Activated CD8-positive, alpha-beta T cell treated with anti-CD3 and anti-CD28 coated beads, Interleukin-2, amount 10 ng/mL, durations not matched to agents 7 days and 5 days (primary cell): ENCODE measurements at regions of chr5 and their contacts with region 1.

Region 1: DNA sequence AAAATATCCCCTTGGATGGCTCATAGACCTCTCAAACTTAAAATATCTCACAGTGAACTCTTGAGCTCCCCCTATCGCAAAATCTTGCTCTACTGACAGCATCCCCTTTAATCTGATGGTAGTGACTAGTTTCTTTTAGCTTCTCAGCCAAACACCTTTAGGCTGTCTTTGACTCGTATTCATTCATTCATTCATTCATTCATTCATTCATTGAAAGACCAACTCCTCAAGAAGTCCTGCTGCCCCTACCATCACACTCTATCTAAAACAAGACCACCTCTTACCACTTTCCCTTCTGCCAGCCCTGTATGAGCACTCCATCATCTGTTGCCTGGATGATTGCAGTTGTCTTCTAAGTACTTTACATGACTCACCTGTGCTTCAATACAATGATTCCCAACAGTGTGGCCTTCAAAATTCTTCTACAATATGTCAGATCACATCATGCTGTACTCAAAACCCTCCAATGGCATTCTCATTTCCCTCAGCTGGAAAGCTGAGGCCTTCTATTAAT is 46.8 kb downstream of the ITGA2 start:
- DNase-seq: no peak
- ATAC-seq: no peak
- H3K4me3 Mint-ChIP-seq: no peak overlapping the region
- H3K27ac Mint-ChIP-seq: no peak overlapping the region
- H3K4me1 Mint-ChIP-seq: peaks cover 77% of the 10 kb centered on the region
- H3K27me3 Mint-ChIP-seq: no peaks in the 10 kb centered on the region

Region 2: DNA sequence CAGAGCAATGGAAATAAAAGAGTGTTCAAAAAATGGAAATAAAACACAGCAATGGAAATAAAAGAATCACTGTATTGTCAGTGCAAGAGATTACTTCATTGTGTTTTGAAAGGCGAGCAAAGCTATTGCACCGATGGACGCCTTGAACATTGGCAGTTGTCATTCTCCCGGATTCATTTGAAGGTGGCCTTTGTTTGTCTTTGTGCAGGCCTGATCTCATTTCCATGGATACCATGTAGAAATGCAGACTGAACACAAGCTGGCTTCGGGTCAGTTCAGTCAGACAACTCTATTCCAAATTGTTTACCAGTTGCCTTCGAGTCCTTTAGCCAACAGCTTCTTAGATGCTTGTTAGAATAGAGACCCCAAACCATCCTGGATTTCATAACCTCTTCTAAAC is 38.5 kb before region 1 on chr5:
- CTCF ChIA-PET with region 1: interaction called, 10 read pairs
- POLR2A ChIA-PET with region 1: no interaction called
- DNase-seq: no peak
- ATAC-seq: no peak
- H3K4me3 Mint-ChIP-seq: no peak overlapping the region
- H3K27ac Mint-ChIP-seq: no peak overlapping the region
- H3K4me1 Mint-ChIP-seq: peaks cover 5% of the 10 kb centered on the region
- H3K27me3 Mint-ChIP-seq: peaks cover 7% of the 10 kb centered on the region

Region 3: DNA sequence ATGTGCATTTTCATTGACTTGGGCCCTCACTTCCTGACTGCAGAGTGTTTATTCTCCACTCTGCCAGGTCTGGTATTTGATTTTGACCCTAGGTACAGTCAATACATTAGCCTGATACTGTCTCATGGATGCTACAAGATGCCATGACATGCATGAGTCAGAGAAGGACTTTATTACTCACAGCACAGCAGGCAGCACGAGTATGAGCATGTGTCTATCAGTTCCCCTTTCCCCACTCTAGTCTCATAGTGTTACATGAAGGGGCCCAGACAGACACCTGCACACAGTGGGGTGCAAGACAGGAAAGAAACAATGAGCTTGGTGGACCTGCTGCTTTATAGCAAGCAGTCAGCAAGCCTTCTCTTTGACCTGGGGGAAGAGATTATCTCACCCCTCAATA is 27.2 kb before region 1 on chr5:
- CTCF ChIA-PET with region 1: interaction called, 23 read pairs
- POLR2A ChIA-PET with region 1: interaction called, 3 read pairs
- DNase-seq: no peak
- ATAC-seq: no peak
- H3K4me3 Mint-ChIP-seq: no peak overlapping the region
- H3K27ac Mint-ChIP-seq: no peak overlapping the region
- H3K4me1 Mint-ChIP-seq: peaks cover 67% of the 10 kb centered on the region
- H3K27me3 Mint-ChIP-seq: peaks cover 4% of the 10 kb centered on the region

Region 4: DNA sequence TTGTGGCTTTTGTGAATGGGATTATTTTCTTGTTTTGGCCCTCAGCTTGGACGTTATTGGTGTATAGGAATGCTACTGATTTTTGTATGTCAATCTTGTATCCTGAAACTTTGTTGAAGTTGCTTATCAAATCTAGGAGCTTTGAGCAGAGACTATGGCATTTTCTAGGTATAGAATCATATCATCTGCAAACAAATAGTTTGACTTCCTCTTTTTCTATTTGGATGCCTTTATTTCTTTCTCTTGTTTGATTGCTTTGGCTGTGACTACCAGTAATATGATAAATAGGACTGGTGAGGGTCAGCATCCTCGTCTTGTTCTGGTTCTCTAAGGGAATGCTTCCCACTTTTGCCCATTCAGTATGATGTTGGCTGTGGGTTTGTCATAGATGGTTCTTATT is 22.1 kb before region 1 on chr5:
- CTCF ChIA-PET with region 1: interaction called, 23 read pairs
- POLR2A ChIA-PET with region 1: no interaction called
- DNase-seq: no peak
- ATAC-seq: no peak
- H3K4me3 Mint-ChIP-seq: no peak overlapping the region
- H3K27ac Mint-ChIP-seq: no peak overlapping the region
- H3K4me1 Mint-ChIP-seq: peaks cover 40% of the 10 kb centered on the region
- H3K27me3 Mint-ChIP-seq: peaks cover 10% of the 10 kb centered on the region

Region 5: GRCh38 chr5:53023969-53024368 is 12.0 kb before region 1 on chr5:
- CTCF ChIA-PET with region 1: interaction called, 14 read pairs
- POLR2A ChIA-PET with region 1: interaction called, 3 read pairs
- DNase-seq: no peak
- ATAC-seq: peak; percentile 44
- H3K4me3 Mint-ChIP-seq: no peak overlapping the region
- H3K27ac Mint-ChIP-seq: no peak overlapping the region
- H3K4me1 Mint-ChIP-seq: peaks cover 3% of the 10 kb centered on the region
- H3K27me3 Mint-ChIP-seq: no peaks in the 10 kb centered on the region

Region 6: DNA sequence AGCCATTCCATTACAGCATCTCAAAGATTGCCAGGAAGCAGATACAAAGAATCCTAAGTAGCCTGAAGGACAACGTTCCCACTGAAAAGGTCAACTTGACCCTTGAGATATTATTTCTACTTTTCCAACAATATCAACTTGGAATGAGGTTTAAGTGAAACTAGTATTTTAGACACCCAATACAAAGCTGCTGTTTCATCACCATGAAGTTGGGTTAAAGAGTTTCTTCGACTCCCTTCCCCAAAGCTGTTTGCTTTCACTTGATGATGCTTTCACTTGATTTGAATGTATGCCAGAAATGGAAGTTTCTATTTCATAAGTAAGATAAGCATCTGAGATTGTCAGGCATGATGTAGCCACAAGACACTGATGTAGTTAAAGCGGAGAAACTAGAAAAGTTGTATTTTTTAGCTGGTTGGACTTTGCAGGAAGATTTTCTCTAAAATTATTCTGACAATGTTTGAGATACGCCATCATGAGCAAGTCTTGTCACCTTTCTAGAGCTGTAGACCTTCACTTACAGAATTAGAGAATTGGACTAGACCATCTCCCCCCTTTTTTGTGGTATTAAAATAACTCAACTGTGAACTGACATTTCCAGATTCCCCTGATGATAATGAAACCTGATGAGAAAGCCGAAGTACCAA is 53.5 kb after region 1 on chr5:
- CTCF ChIA-PET with region 1: interaction called, 34 read pairs
- POLR2A ChIA-PET with region 1: interaction called, 7 read pairs
- DNase-seq: no peak
- ATAC-seq: peak; percentile 57
- H3K4me3 Mint-ChIP-seq: peak overlapping the region; percentile 29
- H3K27ac Mint-ChIP-seq: peak overlapping the region; percentile 61
- H3K4me1 Mint-ChIP-seq: peaks cover 54% of the 10 kb centered on the region
- H3K27me3 Mint-ChIP-seq: no peaks in the 10 kb centered on the region

Region 7: DNA sequence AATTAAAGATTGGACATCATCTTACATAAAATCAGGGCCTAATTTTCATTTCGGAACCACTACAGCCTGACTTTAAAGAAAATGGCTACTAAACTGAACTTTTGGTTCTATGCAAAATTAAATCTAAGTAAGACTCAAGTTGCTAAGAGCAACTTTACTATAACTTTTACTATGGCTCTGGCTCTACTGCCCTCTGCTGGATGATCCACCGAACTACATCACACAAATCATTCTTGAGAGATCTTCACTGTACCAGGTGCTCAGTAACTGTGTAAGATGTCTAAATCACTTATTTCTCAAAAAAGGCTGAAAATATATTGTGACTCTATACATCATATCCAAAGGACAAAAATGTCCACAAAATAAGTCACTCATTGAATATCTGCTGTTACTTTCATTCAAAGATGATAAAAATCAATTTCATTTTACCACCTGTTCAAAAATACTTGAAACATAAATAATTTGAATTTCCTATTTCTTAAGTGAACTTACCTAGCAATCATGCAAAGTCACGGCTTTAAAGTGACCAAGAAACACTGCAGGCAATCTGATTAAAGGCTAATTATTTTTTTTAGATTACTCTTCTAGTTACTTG is 60.1 kb after region 1 on chr5:
- CTCF ChIA-PET with region 1: interaction called, 34 read pairs
- POLR2A ChIA-PET with region 1: no interaction called
- DNase-seq: peak; percentile 86
- ATAC-seq: peak; percentile 71
- H3K4me3 Mint-ChIP-seq: no peak overlapping the region
- H3K27ac Mint-ChIP-seq: no peak overlapping the region
- H3K4me1 Mint-ChIP-seq: peaks cover 22% of the 10 kb centered on the region
- H3K27me3 Mint-ChIP-seq: no peaks in the 10 kb centered on the region

Region 8: DNA sequence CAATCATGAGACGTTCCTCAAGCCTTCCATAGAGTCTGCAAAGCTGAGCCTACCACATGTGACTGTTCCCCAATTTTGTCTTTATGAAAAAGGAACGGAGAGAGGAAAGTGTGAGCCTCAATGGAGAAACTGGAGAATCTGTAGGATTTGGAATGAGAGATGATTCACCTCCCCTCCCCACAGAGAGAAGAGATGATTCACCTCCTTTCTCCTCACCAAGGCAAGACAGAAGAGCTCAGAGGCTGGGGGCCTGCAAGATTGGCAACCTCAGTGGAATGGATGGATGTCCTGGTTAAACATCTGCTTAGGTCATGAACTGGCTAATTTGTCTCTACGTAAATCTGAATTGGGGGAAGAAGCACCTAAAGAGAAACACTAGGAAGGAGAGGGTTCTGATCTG is 90.6 kb after region 1 on chr5:
- CTCF ChIA-PET with region 1: no interaction called
- POLR2A ChIA-PET with region 1: no interaction called
- DNase-seq: no peak
- ATAC-seq: no peak
- H3K4me3 Mint-ChIP-seq: no peak overlapping the region
- H3K27ac Mint-ChIP-seq: no peak overlapping the region
- H3K4me1 Mint-ChIP-seq: no peaks in the 10 kb centered on the region
- H3K27me3 Mint-ChIP-seq: no peaks in the 10 kb centered on the region